Sigmoid colon (tissue), 7 donors: ENCODE measurements at regions of chr10 and their contacts with region 1.

Region 1: DNA sequence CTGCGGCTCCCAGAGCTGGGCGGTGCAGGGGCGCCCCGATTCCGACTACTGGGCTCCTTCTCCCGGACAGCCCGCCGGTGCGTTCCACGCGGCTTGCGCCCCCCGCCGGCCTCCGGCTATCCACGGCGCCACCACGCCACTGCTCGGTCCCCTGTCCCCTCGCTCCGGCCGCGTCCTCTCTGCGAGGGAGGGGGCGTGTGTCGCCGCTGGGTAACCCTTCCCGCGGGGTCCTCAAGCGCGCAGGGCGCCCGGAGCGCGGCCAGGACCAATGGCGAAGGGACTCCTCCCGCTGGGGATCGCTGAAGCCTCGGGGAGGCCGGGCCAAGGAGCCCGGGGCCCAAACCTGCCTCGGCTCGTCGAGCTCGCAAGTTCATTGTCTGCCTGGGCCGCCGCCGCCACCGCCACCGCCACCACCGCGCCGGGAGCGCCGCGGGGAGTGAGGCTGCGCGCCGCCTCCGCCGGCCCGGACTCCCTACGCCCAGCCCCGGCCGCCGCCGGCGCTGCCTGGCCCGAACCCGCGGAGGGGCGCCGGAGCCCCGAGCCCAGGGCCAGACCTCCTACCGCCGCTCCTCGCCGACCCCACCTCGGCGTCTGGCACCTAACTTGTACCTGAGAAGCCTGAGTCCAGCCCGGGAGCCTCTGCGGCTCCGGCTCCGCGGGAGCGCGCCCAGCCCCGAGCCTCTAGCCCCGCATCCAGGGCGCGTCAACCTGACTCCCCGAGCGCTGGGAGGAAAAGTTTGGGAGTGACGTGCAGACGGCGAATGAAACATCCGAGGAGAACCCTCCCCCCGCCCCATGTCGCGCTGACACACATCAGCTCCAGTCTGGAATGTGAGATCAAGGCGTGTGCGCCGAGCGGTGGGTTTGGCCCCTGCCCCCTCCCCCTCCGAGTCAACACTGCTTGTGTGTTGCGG is at the start of gene CHST15:
- DNase-seq: peak; percentile 89
- H3K4me3 ChIP-seq: peak within 1 kb of the TSS; percentile 59 to 73 (median 66)
- H3K27ac ChIP-seq: peak within 1 kb of the TSS; percentile 90 to 93 (median 91)
- H3K4me1 ChIP-seq: peaks cover 0 to 60% (median 54%) of the 10 kb centered on the region in 4 donors
- H3K27me3 ChIP-seq: no peaks in the 10 kb centered on the region
- CTCF ChIP-seq: peak in 1 of 4 experiments; percentile 22
- EP300 ChIP-seq: no peak
- POLR2A ChIP-seq: peak; percentile 47 to 76
- total RNA-seq, gene CHST15: 29.9 to 57.9 (median 43.8) TPM

Region 2: GRCh38 chr10:124005991-124006392 is 87.1 kb before region 1 on chr10:
- intact Hi-C with region 1: loop called (anchors 2 kb)
- DNase-seq: peak; percentile 90
- H3K4me3 ChIP-seq: no peak overlapping the region
- H3K27ac ChIP-seq: peak overlapping the region; percentile 85 to 90 (median 89)
- H3K4me1 ChIP-seq: peaks cover 0 to 74% (median 69%) of the 10 kb centered on the region in 4 donors
- H3K27me3 ChIP-seq: no peaks in the 10 kb centered on the region
- CTCF ChIP-seq: no peak
- EP300 ChIP-seq: peak in 1 of 4 donors; percentile 15
- POLR2A ChIP-seq: no peak

Region 3: GRCh38 chr10:124106241-124106879 is 13.2 kb after region 1 on chr10:
- intact Hi-C with region 1: no loop called
- DNase-seq: peak; percentile 93
- H3K4me3 ChIP-seq: peak overlapping the region in 1 of 4 donors; percentile 2
- H3K27ac ChIP-seq: peak overlapping the region; percentile 82 to 84 (median 83)
- H3K4me1 ChIP-seq: peaks cover 0 to 37% (median 34%) of the 10 kb centered on the region in 4 donors
- H3K27me3 ChIP-seq: no peaks in the 10 kb centered on the region
- CTCF ChIP-seq: no peak
- EP300 ChIP-seq: no peak
- POLR2A ChIP-seq: no peak